OCI-LY7 (cell line): ENCODE measurements at regions of chr7 and their contacts with region 1.

Region 1: DNA sequence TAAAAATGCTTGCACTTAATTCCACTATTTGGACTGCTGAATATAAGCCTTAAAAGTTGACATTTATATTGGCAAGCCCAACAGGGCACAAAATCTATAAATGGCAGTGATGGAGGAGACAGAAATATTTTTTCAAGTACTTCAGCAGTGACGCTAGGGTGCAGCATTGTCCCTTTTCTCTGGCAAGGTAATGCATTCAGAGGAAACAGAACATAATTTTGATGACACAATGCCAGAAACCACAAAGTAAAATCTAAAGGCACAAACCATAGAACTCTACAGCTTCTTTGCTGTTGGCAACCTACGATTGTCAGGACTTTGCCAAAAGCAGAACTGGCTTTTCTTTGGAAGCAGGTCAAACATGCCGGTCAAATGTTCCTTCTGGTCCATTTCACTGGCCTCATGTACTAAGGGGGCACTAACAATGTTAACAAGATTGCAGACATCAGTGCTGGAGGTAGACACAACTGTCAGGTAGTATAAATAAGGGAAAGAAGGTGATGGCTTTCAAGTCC is 30.9 kb upstream of the FAM133B start:
- DNase-seq: peak; percentile 82
- H3K4me3 ChIP-seq: no peak overlapping the region
- H3K27ac ChIP-seq: no peak overlapping the region
- H3K4me1 ChIP-seq: peaks cover 21% of the 10 kb centered on the region
- CTCF ChIP-seq: peak; percentile 91

Region 2: GRCh38 chr7:92609921-92610518 is 11.1 kb before region 1 on chr7:
- CTCF ChIA-PET with region 1: interaction called, 3 read pairs
- POLR2A ChIA-PET with region 1: interaction called, 17 read pairs
- intact Hi-C with region 1: no loop called
- DNase-seq: peak; percentile 52
- H3K4me3 ChIP-seq: no peak overlapping the region
- H3K27ac ChIP-seq: no peak overlapping the region
- H3K4me1 ChIP-seq: peaks cover 26% of the 10 kb centered on the region
- CTCF ChIP-seq: peak; percentile 81

Region 3: GRCh38 chr7:92691578-92691977 is 70.5 kb after region 1 on chr7:
- CTCF ChIA-PET with region 1: no interaction called
- POLR2A ChIA-PET with region 1: no interaction called
- intact Hi-C with region 1: loop called (anchors 5 kb)
- DNase-seq: peak; percentile 75
- H3K4me3 ChIP-seq: no peak overlapping the region
- H3K27ac ChIP-seq: no peak overlapping the region
- H3K4me1 ChIP-seq: peaks cover 4% of the 10 kb centered on the region
- CTCF ChIP-seq: peak; percentile 90

Region 4: DNA sequence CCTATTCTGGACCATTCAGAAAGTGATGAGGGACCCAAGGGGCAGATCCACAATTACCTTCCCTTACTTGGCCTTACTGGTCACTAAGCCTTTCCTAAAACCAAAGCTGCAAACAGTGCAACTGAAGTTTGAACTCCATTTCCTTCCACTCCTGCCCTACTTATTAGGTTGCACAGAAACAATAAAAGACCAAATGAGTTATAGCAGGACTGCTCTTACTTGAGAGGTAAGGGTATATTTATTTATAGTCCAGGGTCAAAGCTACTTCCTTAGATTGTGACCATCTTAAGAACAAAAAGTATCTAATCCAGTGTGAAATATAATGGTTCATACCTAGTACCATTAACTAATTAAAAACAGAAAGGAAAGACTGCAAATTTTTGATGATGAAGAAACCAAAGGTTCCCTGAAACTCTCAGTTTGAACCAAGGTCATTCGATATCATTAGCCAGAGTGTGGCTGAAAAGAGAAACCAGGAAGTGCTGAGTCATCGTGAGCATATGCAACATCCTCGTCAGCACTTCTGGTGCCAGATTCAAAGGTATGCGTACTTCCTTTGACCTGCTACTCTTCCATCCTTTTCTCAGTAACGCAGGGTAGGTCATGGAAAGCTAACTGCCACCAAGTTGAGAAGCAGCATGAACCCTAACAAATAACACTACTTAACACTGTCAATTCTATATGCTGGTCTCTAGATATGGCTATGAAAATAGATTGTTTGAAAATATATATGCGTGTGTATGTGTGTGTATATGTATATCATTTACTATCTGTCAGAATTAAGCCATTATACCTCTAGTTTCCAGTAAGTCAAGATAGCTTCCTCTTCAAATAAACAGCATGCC is 188.5 kb after region 1 on chr7:
- CTCF ChIA-PET with region 1: no interaction called
- POLR2A ChIA-PET with region 1: no interaction called
- intact Hi-C with region 1: no loop called
- DNase-seq: peak; percentile 80
- H3K4me3 ChIP-seq: peak overlapping the region; percentile 19
- H3K27ac ChIP-seq: peak overlapping the region; percentile 74
- H3K4me1 ChIP-seq: peaks cover 66% of the 10 kb centered on the region
- CTCF ChIP-seq: no peak

Region 5: GRCh38 chr7:92868683-92869293 is 247.7 kb after region 1 on chr7:
- CTCF ChIA-PET with region 1: no interaction called
- POLR2A ChIA-PET with region 1: interaction called, 4 read pairs
- intact Hi-C with region 1: loop called (anchors 1 kb)
- DNase-seq: no peak
- H3K4me3 ChIP-seq: no peak overlapping the region
- H3K27ac ChIP-seq: no peak overlapping the region
- H3K4me1 ChIP-seq: no peaks in the 10 kb centered on the region
- CTCF ChIP-seq: no peak

Region 6: DNA sequence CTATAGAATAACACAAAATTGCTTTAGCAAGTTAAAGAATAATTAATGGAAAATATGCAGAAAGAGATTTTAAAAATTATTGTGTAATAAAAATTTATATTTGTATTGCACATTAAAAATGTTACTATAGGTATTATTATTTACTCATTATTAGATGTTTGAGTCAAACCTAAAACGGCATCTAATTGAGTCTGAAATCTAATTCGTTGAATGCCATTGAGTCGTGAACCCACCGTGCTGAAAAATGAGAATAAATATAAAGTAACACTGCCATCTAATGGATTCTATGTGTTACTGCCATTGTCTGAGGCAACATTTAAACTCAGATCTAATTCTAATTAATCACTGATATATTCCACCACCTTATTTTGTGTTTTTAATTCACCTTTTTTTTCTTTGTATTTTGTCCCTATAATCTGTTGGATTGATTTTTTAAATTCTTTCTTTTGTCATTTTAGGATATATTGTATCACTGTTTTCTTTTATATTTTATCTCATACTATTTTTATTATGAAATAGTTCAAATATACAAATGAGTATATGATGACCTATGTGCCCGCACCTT is 434.5 kb after region 1 on chr7:
- CTCF ChIA-PET with region 1: no interaction called
- POLR2A ChIA-PET with region 1: no interaction called
- intact Hi-C with region 1: loop called (anchors 1 kb)
- DNase-seq: peak; percentile 54
- H3K4me3 ChIP-seq: no peak overlapping the region
- H3K27ac ChIP-seq: no peak overlapping the region
- H3K4me1 ChIP-seq: no peaks in the 10 kb centered on the region
- CTCF ChIP-seq: peak; percentile 92